B cell (primary cell): ENCODE measurements at regions of chr16 and their contacts with region 1.

Region 1: DNA sequence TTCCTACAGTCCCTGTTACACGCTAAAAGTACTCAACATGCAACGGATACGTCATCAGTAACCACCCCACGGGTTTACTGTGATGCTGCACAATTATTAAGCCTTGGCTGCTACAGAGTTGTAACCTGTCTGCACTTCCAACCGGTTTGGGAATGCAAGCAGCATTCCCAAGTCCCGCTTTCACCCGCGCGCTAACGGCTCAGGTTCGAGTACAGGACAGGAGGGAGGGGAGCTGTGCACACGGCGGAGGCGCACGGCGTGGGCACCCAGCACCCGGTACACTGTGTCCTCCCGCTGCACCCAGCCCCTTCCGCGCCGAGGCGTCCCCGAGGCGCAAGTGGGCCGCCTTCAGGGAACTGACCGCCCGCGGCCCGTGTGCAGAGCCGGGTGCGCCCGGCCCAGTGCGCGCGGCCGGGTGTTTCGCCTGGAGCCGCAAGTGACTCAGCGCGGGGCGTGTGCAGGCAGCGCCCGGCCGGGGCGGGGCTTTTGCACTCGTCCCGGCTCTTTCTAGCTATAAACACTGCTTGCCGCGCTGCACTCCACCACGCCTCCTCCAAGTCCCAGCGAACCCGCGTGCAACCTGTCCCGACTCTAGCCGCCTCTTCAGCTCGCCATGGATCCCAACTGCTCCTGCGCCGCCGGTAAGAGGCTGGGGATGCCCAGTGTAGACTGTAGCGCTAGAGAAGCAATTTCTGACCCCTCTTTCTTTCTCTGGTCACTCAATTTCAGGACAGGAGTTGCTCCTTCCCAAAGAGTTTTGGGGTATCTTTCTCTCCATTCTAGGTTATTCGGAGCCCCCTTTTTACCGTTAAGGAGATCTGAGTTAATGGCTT is at the start of gene MT2A:
- DNase-seq: peak; percentile 85
- ATAC-seq: peak; percentile 87
- H3K4me3 ChIP-seq: peak within 1 kb of the TSS; percentile 60 to 77 (median 73)
- H3K4me3 Mint-ChIP-seq: peak within 1 kb of the TSS; percentile 97
- H3K27ac ChIP-seq: peak within 1 kb of the TSS in 1 of 2 donors; percentile 12
- H3K27ac Mint-ChIP-seq: peak within 1 kb of the TSS; percentile 88
- H3K4me1 ChIP-seq: peaks cover 21 to 41% of the 10 kb centered on the region in 2 donors
- H3K4me1 Mint-ChIP-seq: peaks cover 37% of the 10 kb centered on the region
- H3K27me3 ChIP-seq: no peaks in the 10 kb centered on the region
- H3K27me3 Mint-ChIP-seq: peaks cover 4% of the 10 kb centered on the region
- CTCF ChIP-seq: no peak
- total RNA-seq, gene MT2A: 6.7 and 14.4 TPM in 2 replicates

Region 2: DNA sequence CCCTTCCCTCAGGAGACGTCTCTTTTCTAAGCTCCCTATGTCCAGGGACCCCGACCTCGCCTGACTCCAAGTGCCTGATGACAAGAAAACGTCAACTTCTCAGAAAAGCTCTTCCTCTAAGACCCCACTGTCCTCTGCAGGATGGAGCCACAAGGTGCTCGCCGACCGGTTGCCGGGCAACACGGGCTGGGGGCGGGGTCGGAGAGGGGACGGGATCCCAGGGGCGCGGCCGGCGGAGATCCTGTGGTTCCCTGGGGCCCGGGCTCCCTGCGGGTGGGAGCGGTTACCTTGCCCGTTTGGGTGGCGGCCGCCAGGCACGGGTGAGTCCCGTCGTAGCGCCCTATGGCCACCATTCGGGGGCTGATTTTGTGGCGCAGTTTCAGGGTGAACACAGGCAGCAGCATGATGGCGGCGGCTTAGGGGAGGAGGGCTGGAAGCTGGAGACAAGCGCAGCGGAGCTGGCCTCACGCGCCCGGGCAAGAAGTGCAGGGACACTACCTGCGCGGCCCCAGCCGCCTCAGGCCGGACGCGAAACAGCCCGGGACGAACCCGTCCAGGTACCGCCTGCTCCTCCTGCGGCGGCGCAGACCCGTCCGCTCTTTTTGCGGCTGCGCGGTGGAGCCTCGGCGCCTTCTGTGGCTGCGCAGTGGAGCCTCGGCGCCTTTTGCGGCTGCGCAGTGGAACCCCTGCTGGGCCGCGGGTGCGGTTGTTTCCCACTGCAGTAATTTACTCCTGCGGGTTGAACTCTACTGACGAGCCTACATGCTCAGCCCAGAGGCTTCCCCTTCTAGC is 88.6 kb before region 1 on chr16 and contains the start of gene BBS2:
- CTCF ChIA-PET with region 1: interaction called, 5 read pairs
- POLR2A ChIA-PET with region 1: no interaction called
- intact Hi-C with region 1: loop called (anchors 1 kb)
- DNase-seq: peak; percentile 94
- ATAC-seq: peak; percentile 90
- H3K4me3 ChIP-seq: peak within 1 kb of the TSS; percentile 64 to 97 (median 92)
- H3K4me3 Mint-ChIP-seq: peak within 1 kb of the TSS; percentile 90
- H3K27ac ChIP-seq: peak within 1 kb of the TSS; percentile 58 to 80
- H3K27ac Mint-ChIP-seq: peak within 1 kb of the TSS; percentile 89
- H3K4me1 ChIP-seq: peaks cover 9 to 18% of the 10 kb centered on the region in 2 donors
- H3K4me1 Mint-ChIP-seq: peaks cover 38% of the 10 kb centered on the region
- H3K27me3 ChIP-seq: no peaks in the 10 kb centered on the region
- H3K27me3 Mint-ChIP-seq: no peaks in the 10 kb centered on the region
- CTCF ChIP-seq: no peak
- total RNA-seq, gene BBS2: 63.4 and 69.6 TPM in 2 replicates

Region 3: GRCh38 chr16:56630134-56630533 is 21.9 kb after region 1 on chr16:
- CTCF ChIA-PET with region 1: interaction called, 7 read pairs
- POLR2A ChIA-PET with region 1: no interaction called
- intact Hi-C with region 1: loop called (anchors 2 kb)
- DNase-seq: peak; percentile 69
- ATAC-seq: peak; percentile 93
- H3K4me3 ChIP-seq: no peak overlapping the region
- H3K4me3 Mint-ChIP-seq: peak overlapping the region; percentile 26
- H3K27ac ChIP-seq: no peak overlapping the region
- H3K27ac Mint-ChIP-seq: no peak overlapping the region
- H3K4me1 ChIP-seq: peaks cover 37 to 43% of the 10 kb centered on the region in 2 donors
- H3K4me1 Mint-ChIP-seq: peaks cover 34% of the 10 kb centered on the region
- H3K27me3 ChIP-seq: peaks cover 0 to 65% (median 36%) of the 10 kb centered on the region in 4 experiments
- H3K27me3 Mint-ChIP-seq: peaks cover 59% of the 10 kb centered on the region
- CTCF ChIP-seq: no peak

Region 4: DNA sequence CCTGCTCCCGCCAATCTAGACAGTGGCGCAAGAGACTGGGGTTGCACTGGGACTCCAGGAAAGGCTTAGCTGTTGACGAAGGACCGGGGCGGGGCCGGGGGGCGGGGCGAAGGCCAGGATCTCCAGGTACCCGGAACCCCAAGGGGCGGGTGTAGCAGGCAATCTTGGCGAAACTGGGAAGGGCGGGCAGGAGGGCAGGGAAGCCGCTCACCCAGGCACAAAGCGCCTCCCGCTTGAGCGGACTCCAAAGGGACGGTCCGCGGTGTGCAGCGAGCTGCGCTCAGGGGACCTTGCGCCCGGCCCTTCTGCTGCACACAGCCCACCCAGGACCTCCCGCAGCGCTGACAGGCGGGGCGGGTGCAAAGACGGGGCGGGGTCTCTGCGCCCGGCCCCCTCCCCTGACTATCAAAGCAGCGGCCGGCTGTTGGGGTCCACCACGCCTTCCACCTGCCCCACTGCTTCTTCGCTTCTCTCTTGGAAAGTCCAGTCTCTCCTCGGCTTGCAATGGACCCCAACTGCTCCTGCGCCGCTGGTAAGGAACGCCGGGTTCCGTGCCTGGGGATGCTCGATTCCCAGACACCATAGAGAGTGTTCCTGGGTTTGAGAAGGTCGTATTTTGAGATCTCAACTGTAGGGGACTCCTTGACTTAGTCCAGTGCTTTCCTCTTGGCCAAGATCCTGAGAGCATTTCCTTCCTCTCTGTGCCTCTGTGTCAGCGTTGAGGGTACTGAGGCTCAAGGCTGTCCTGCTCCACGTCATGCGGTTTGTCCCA is 49.5 kb after region 1 on chr16 and contains the start of gene MT1F:
- CTCF ChIA-PET with region 1: no interaction called
- POLR2A ChIA-PET with region 1: no interaction called
- intact Hi-C with region 1: loop called (anchors 1 kb)
- DNase-seq: peak; percentile 71
- ATAC-seq: peak; percentile 74
- H3K4me3 ChIP-seq: peak within 1 kb of the TSS; percentile 26 to 79 (median 70)
- H3K4me3 Mint-ChIP-seq: peak within 1 kb of the TSS; percentile 99
- H3K27ac ChIP-seq: no peak within 1 kb of the TSS
- H3K27ac Mint-ChIP-seq: peak within 1 kb of the TSS; percentile 90
- H3K4me1 ChIP-seq: peaks cover 16 to 32% of the 10 kb centered on the region in 2 donors
- H3K4me1 Mint-ChIP-seq: peaks cover 29% of the 10 kb centered on the region
- H3K27me3 ChIP-seq: peaks cover 0 to 12% (median 4%) of the 10 kb centered on the region in 4 experiments
- H3K27me3 Mint-ChIP-seq: peaks cover 26% of the 10 kb centered on the region
- CTCF ChIP-seq: no peak
- total RNA-seq, gene MT1F: 4.3 and 7.6 TPM in 2 replicates

Region 5: GRCh38 chr16:56729735-56730662 is 121.7 kb after region 1 on chr16 and contains the start of gene NUP93:
- CTCF ChIA-PET with region 1: no interaction called
- POLR2A ChIA-PET with region 1: interaction called, 4 read pairs
- intact Hi-C with region 1: loop called (anchors 1 kb)
- DNase-seq: peak; percentile 93
- ATAC-seq: peak; percentile 97
- H3K4me3 ChIP-seq: peak within 1 kb of the TSS; percentile 76 to 92 (median 88)
- H3K4me3 Mint-ChIP-seq: peak within 1 kb of the TSS; percentile 93
- H3K27ac ChIP-seq: peak within 1 kb of the TSS; percentile 64 to 85
- H3K27ac Mint-ChIP-seq: peak within 1 kb of the TSS; percentile 80
- H3K4me1 ChIP-seq: peaks cover 32 to 38% of the 10 kb centered on the region in 2 donors
- H3K4me1 Mint-ChIP-seq: peaks cover 25% of the 10 kb centered on the region
- H3K27me3 ChIP-seq: no peaks in the 10 kb centered on the region
- H3K27me3 Mint-ChIP-seq: no peaks in the 10 kb centered on the region
- CTCF ChIP-seq: no peak
- total RNA-seq, gene NUP93: 64.6 and 67.1 TPM in 2 replicates

Region 6: DNA sequence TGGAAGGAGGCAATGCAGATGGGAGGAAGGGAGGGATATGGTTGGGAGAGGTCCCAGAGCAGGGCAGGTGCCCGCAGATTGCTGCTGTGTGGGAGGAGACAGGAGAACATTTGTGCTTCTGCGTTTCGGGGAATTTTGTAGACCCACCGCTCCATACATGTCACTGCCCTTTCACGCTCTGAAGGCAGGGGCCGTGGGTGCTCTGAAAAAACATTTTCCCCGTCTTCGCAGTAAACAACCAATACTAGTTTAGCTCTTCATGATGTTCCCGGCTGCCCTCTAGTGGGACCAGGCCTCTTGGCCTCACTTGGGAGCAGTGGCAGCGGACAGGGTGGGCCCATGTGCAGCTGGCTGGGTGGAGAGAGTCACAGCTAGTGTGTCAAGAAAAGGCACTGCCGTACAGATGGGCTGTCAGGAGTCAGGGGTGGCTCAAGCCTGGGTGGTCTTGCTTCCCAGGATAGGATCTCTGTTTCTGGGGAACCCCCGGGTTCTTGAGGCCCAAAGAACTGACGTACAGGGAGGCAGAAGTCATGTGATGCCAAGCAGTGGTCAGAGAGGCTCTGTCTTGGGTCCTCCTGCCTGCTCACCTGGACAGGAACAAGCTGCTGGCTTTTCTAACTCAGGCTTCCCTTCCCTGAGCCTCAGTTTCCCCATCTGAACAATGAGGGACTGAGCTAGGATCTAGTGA is 437.6 kb after region 1 on chr16:
- CTCF ChIA-PET with region 1: no interaction called
- POLR2A ChIA-PET with region 1: no interaction called
- intact Hi-C with region 1: loop called (anchors 2 kb)
- DNase-seq: peak; percentile 84
- ATAC-seq: peak; percentile 48
- H3K4me3 ChIP-seq: peak overlapping the region in 2 of 5 experiments; percentile 25 to 38
- H3K4me3 Mint-ChIP-seq: peak overlapping the region; percentile 78
- H3K27ac ChIP-seq: peak overlapping the region; percentile 65 to 72
- H3K27ac Mint-ChIP-seq: peak overlapping the region; percentile 98
- H3K4me1 ChIP-seq: peaks cover 51 to 69% of the 10 kb centered on the region in 2 donors
- H3K4me1 Mint-ChIP-seq: peaks cover 68% of the 10 kb centered on the region
- H3K27me3 ChIP-seq: no peaks in the 10 kb centered on the region
- H3K27me3 Mint-ChIP-seq: no peaks in the 10 kb centered on the region
- CTCF ChIP-seq: peak; percentile 67